ENCODE measurements at regions of chr22 and their contacts with region 1.

Region 1: GRCh38 chr22:35627264-35628041 is 10.3 kb upstream of the MB start:
- DNase-seq: peak; percentile 26 to 76 (median 45)
- ATAC-seq: peak; percentile 62
- H3K4me3 ChIP-seq: peak overlapping the region; percentile 54
- H3K4me3 Mint-ChIP-seq: peak overlapping the region; percentile 79
- H3K27ac ChIP-seq: no peak overlapping the region
- H3K27ac Mint-ChIP-seq: no peak overlapping the region
- H3K4me1 ChIP-seq: peaks cover 21% of the 10 kb centered on the region
- H3K4me1 Mint-ChIP-seq: peaks cover 23% of the 10 kb centered on the region
- H3K27me3 ChIP-seq: no peaks in the 10 kb centered on the region
- H3K27me3 Mint-ChIP-seq: peaks cover 9% of the 10 kb centered on the region
- CTCF ChIP-seq: peak; percentile 49

Region 2: GRCh38 chr22:35350539-35351503 is 276.6 kb before region 1 on chr22:
- CTCF ChIA-PET with region 1: no interaction called
- POLR2A ChIA-PET with region 1: no interaction called
- intact Hi-C with region 1: loop called (anchors 1 to 2 kb)
- DNase-seq: peak; percentile 69 to 93 (median 79)
- ATAC-seq: peak; percentile 81
- H3K4me3 ChIP-seq: peak overlapping the region; percentile 55
- H3K4me3 Mint-ChIP-seq: peak overlapping the region; percentile 80
- H3K27ac ChIP-seq: no peak overlapping the region
- H3K27ac Mint-ChIP-seq: peak overlapping the region; percentile 43
- H3K4me1 ChIP-seq: peaks cover 31% of the 10 kb centered on the region
- H3K4me1 Mint-ChIP-seq: peaks cover 25% of the 10 kb centered on the region
- H3K27me3 ChIP-seq: no peaks in the 10 kb centered on the region
- H3K27me3 Mint-ChIP-seq: peaks cover 12% of the 10 kb centered on the region
- CTCF ChIP-seq: peak; percentile 84

Region 3: DNA sequence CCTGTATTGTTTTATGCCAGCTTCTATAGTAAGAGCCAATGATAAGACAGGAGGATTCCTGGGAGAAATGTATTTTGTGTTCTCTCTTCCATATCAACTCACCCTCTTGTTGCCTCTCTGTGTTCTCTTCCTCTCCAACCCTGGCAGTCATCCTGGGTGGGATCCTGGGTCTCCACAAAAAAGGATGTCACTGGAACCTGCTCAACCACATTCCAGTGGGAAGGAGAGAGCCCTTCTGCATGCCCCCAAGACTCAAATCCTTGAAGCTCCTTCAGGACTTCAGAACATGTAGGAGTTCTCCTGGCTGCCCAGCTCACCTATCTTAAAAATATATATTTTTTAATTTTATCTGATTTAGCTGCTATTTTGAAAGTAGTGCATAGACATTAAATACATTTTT is 46.9 kb after region 1 on chr22:
- CTCF ChIA-PET with region 1: no interaction called
- POLR2A ChIA-PET with region 1: no interaction called
- intact Hi-C with region 1: no loop called
- DNase-seq: no peak
- ATAC-seq: no peak
- H3K4me3 ChIP-seq: no peak overlapping the region
- H3K4me3 Mint-ChIP-seq: no peak overlapping the region
- H3K27ac ChIP-seq: no peak overlapping the region
- H3K27ac Mint-ChIP-seq: no peak overlapping the region
- H3K4me1 ChIP-seq: no peaks in the 10 kb centered on the region
- H3K4me1 Mint-ChIP-seq: no peaks in the 10 kb centered on the region
- H3K27me3 ChIP-seq: no peaks in the 10 kb centered on the region
- H3K27me3 Mint-ChIP-seq: no peaks in the 10 kb centered on the region
- CTCF ChIP-seq: no peak

Region 4: DNA sequence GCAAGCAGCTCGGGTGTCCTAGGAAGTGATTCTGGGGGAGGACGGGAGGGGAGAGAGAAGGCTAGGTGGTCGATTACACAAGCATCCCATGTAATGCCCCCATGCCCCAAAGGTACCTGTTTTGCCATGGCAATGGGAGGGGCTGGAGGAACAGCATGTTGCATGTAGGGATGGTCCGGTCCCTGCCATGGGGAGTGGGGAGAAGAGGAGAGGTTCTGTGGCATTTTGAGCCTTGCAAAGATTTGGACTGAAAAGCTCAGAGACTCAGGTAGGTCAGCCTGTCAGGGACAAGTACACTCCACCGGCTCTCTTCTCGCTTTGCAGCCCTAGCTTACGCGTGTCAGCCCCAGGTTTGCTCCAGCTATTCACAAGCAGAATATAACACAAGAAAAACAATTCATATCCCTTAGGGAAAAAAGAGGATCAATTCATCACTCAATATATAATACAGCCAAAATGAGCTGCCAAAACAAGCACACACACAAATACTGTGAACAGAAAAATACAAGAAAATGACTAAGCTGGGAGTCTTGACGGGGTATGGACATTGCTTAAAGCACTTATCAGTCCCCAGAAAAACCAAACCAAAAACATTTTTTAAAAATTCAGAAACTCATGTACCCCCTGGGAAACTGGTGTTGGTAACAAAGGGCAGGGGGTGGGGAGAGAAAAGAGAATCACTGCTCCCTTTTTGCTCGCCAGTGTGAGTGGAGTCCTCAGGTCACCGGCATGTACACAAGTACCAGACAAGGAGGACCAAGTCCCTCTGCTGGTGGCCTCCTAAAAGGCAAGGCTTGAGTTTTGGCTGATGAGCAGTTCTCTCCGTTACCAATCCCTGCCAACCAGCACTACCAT is 111.8 kb after region 1 on chr22:
- CTCF ChIA-PET with region 1: no interaction called
- POLR2A ChIA-PET with region 1: no interaction called
- intact Hi-C with region 1: loop called in 1 of 2 experiments (anchors 1 kb)
- DNase-seq: peak in 6 of 14 experiments; percentile 1 to 40 (median 15)
- ATAC-seq: no peak
- H3K4me3 ChIP-seq: no peak overlapping the region
- H3K4me3 Mint-ChIP-seq: no peak overlapping the region
- H3K27ac ChIP-seq: no peak overlapping the region
- H3K27ac Mint-ChIP-seq: no peak overlapping the region
- H3K4me1 ChIP-seq: no peaks in the 10 kb centered on the region
- H3K4me1 Mint-ChIP-seq: no peaks in the 10 kb centered on the region
- H3K27me3 ChIP-seq: no peaks in the 10 kb centered on the region
- H3K27me3 Mint-ChIP-seq: no peaks in the 10 kb centered on the region
- CTCF ChIP-seq: peak; percentile 9

Region 5: GRCh38 chr22:35921777-35922176 is 294.3 kb after region 1 on chr22:
- CTCF ChIA-PET with region 1: no interaction called
- POLR2A ChIA-PET with region 1: no interaction called
- intact Hi-C with region 1: loop called (anchors 1 kb)
- DNase-seq: peak in 7 of 14 experiments; percentile 3 to 63 (median 39)
- ATAC-seq: no peak
- H3K4me3 ChIP-seq: no peak overlapping the region
- H3K4me3 Mint-ChIP-seq: no peak overlapping the region
- H3K27ac ChIP-seq: no peak overlapping the region
- H3K27ac Mint-ChIP-seq: no peak overlapping the region
- H3K4me1 ChIP-seq: no peaks in the 10 kb centered on the region
- H3K4me1 Mint-ChIP-seq: no peaks in the 10 kb centered on the region
- H3K27me3 ChIP-seq: no peaks in the 10 kb centered on the region
- H3K27me3 Mint-ChIP-seq: no peaks in the 10 kb centered on the region
- CTCF ChIP-seq: peak; percentile 53

Region 6: DNA sequence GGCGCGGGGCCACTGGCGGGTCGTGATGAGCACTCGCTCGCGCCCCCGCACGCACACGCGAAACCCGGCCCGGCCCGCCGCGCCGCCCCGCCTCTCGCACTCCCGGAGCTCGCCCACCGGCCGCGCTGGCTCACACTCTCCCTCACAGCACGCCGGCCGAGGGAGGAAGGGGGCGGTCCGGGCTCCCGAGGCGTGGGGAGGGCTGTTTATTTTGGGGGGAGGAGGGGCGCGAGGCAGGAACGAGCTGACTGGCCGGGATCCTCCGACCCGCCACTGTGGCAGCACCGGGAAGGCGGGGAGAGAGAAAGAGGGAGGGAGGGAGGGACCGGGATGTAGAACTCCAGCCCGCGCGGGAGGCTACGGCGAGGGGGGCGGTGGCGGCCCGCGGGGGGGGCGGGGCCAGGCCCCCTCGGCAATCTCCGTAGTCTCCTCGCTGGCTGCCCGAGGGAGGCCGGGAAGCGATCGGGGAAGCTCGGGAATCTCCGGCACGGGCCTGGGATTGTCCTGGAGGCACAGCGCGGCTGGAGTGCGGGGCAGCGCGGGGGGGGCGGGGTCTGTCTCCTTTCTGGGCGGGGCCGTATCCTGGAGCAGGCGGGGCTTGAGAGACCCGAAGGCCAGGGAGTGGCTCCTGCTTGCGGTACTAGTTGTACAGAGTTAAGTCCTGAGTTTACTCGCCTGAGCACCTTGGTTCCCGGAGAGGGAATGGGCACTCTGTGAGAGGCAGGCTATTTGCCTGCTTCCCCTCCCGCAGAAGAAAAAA is 401.4 kb after region 1 on chr22 and contains the start of gene RBFOX2:
- CTCF ChIA-PET with region 1: no interaction called
- POLR2A ChIA-PET with region 1: no interaction called
- intact Hi-C with region 1: no loop called
- DNase-seq: peak; percentile 31 to 80 (median 56)
- ATAC-seq: peak; percentile 74
- H3K4me3 ChIP-seq: peak within 1 kb of the TSS; percentile 61
- H3K4me3 Mint-ChIP-seq: peak within 1 kb of the TSS; percentile 88
- H3K27ac ChIP-seq: no peak within 1 kb of the TSS
- H3K27ac Mint-ChIP-seq: peak within 1 kb of the TSS; percentile 11
- H3K4me1 ChIP-seq: peaks cover 14% of the 10 kb centered on the region
- H3K4me1 Mint-ChIP-seq: peaks cover 26% of the 10 kb centered on the region
- H3K27me3 ChIP-seq: peaks cover 0 to 4% of the 10 kb centered on the region in 2 experiments
- H3K27me3 Mint-ChIP-seq: peaks cover 4% of the 10 kb centered on the region
- CTCF ChIP-seq: no peak
- total RNA-seq, gene RBFOX2: 1.9 to 2.4 TPM

Region 7: GRCh38 chr22:36123673-36124630 is 496.5 kb after region 1 on chr22:
- CTCF ChIA-PET with region 1: no interaction called
- POLR2A ChIA-PET with region 1: no interaction called
- intact Hi-C with region 1: loop called (anchors 1 to 2 kb)
- DNase-seq: peak; percentile 87 to 98 (median 92)
- ATAC-seq: peak; percentile 97
- H3K4me3 ChIP-seq: peak overlapping the region; percentile 47
- H3K4me3 Mint-ChIP-seq: peak overlapping the region; percentile 60
- H3K27ac ChIP-seq: peak overlapping the region in 1 of 2 donors; percentile 32
- H3K27ac Mint-ChIP-seq: peak overlapping the region; percentile 70
- H3K4me1 ChIP-seq: peaks cover 13% of the 10 kb centered on the region
- H3K4me1 Mint-ChIP-seq: peaks cover 8% of the 10 kb centered on the region
- H3K27me3 ChIP-seq: no peaks in the 10 kb centered on the region
- H3K27me3 Mint-ChIP-seq: no peaks in the 10 kb centered on the region
- CTCF ChIP-seq: peak; percentile 97